ENCODE measurements at regions of chr17 and their contacts with region 1.

Region 1: DNA sequence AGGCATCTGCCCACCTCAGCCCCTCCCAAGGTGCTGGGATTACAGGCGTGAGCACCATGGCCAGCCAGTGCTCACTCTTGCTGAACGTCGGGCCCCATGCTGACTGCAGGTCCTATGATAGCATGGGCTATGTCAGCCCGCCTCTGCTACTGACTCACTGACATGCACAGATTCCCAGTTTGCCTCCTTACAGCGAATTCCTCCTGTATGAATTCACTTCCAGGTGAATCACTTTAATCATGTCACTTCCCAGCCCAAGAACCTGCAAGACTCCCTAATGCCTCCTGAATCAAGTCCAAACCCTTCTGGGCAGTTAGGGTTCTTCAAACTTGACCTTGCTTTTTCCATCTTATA is 16.1 kb upstream of the UBTF start:
- DNase-seq: peak; percentile 86
- H3K4me3 Mint-ChIP-seq: no peak overlapping the region
- H3K27ac Mint-ChIP-seq: peak overlapping the region; percentile 53
- H3K4me1 Mint-ChIP-seq: peaks cover 14% of the 10 kb centered on the region
- H3K27me3 Mint-ChIP-seq: no peaks in the 10 kb centered on the region
- CTCF ChIP-seq: no peak

Region 2: GRCh38 chr17:44141717-44142285 is 93.8 kb before region 1 on chr17 and contains the start of gene HROB:
- CTCF ChIA-PET with region 1: no interaction called
- POLR2A ChIA-PET with region 1: no interaction called
- intact Hi-C with region 1: no loop called
- DNase-seq: peak; percentile 98
- H3K4me3 Mint-ChIP-seq: peak within 1 kb of the TSS; percentile 78
- H3K27ac Mint-ChIP-seq: peak within 1 kb of the TSS; percentile 93
- H3K4me1 Mint-ChIP-seq: peaks cover 26% of the 10 kb centered on the region
- H3K27me3 Mint-ChIP-seq: no peaks in the 10 kb centered on the region
- CTCF ChIP-seq: peak; percentile 84
- total RNA-seq, gene HROB: 5.4 and 6.7 TPM in 2 replicates

Region 3: DNA sequence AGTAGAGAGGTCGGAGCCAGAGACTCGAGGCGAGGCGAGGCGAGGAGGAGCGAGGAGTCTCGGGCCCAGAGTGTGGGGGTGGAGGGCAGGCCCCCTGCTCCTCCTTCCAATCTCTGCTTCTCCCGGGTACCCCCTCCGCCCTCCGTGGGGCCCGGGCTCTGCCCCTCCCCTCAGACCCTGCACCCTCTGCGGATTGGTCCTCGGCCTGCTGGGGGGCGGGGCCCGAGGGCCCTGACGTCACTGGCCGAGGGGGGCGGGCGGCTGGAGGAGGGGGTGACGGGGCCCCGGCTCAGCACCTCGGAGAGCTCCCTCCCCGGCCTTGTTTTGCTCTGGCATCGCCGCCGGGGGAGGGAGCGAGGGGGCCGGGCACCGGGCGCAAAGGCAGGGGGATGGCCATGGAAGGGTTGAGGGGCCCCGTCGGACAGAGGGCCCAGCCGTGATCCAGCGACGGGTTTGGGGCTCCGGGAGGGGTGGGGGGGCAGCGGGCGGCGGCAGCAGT is 72.8 kb after region 1 on chr17 and contains the start of gene RUNDC3A:
- CTCF ChIA-PET with region 1: no interaction called
- POLR2A ChIA-PET with region 1: no interaction called
- intact Hi-C with region 1: loop called (anchors 5 kb)
- DNase-seq: peak; percentile 71
- H3K4me3 Mint-ChIP-seq: peak within 1 kb of the TSS; percentile 68
- H3K27ac Mint-ChIP-seq: no peak within 1 kb of the TSS
- H3K4me1 Mint-ChIP-seq: peaks cover 10% of the 10 kb centered on the region
- H3K27me3 Mint-ChIP-seq: peaks cover 15% of the 10 kb centered on the region
- CTCF ChIP-seq: no peak
- total RNA-seq, gene RUNDC3A: 0.28 and 1.0 TPM in 2 replicates

Region 4: DNA sequence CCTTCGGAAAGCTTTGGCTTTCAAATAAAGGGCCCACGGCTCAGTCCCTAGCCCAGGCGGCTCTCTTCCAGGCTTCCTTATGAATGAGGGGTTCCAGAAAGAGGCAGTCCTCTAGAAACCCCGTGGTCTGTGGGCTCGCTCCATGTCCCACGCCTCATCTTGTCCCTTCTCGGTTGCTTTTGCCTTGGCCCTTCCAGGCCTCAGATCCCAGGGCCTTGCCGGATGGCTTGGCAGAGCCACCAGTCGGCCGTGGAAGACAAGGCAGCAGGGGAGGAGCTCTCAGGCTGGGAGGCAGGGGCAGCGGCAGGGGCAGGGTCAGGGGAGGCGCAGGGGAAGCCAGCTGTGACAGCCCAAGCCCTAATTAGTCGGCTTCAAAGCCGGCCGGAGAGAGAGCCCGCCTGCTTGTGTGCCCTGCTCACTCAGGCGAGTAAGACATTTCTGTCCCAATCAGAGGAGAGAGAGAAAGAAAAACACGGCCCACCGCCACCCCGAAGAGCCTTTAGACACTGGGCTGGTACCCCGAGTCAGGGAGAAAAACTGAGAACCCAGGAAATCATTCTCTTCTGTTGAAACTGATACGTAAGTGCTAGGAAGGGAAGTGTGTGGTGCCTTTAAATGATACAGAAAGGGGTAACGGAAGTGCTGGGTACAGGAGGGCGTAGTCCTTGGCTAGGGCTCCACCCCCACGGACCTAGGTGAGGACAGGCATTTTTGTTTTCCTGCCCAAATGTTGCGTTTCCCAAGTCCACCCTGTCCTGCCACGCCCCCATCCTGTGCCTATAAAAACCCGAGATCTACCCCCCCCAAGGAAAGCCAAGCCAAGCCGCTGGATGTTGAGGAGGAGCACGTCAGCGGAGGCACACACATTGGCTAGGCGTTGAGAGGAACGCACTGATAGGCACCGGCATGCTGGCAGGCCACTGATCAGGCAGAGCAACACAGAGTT is 393.0 kb after region 1 on chr17:
- CTCF ChIA-PET with region 1: no interaction called
- POLR2A ChIA-PET with region 1: no interaction called
- intact Hi-C with region 1: no loop called
- DNase-seq: no peak
- H3K4me3 Mint-ChIP-seq: no peak overlapping the region
- H3K27ac Mint-ChIP-seq: no peak overlapping the region
- H3K4me1 Mint-ChIP-seq: no peaks in the 10 kb centered on the region
- H3K27me3 Mint-ChIP-seq: no peaks in the 10 kb centered on the region
- CTCF ChIP-seq: no peak